ENCODE measurements at regions of chr14 and their contacts with region 1.

Region 1: GRCh38 chr14:93206793-93207467 is at the starts of genes GON7 and UBR7:
- DNase-seq: peak; percentile 96 to 97
- ATAC-seq: peak; percentile 98
- H3K4me3 ChIP-seq: peak within 1 kb of the TSS; percentile 75 to 89
- H3K27ac ChIP-seq: peak within 1 kb of the TSS in 1 of 2 donors; percentile 37
- H3K4me1 ChIP-seq: no peaks in the 10 kb centered on the region
- H3K27me3 ChIP-seq: no peaks in the 10 kb centered on the region
- total RNA-seq, gene GON7: 4.9 to 7.4 TPM
- total RNA-seq, gene UBR7: 15.7 to 18.0 TPM

Region 2: DNA sequence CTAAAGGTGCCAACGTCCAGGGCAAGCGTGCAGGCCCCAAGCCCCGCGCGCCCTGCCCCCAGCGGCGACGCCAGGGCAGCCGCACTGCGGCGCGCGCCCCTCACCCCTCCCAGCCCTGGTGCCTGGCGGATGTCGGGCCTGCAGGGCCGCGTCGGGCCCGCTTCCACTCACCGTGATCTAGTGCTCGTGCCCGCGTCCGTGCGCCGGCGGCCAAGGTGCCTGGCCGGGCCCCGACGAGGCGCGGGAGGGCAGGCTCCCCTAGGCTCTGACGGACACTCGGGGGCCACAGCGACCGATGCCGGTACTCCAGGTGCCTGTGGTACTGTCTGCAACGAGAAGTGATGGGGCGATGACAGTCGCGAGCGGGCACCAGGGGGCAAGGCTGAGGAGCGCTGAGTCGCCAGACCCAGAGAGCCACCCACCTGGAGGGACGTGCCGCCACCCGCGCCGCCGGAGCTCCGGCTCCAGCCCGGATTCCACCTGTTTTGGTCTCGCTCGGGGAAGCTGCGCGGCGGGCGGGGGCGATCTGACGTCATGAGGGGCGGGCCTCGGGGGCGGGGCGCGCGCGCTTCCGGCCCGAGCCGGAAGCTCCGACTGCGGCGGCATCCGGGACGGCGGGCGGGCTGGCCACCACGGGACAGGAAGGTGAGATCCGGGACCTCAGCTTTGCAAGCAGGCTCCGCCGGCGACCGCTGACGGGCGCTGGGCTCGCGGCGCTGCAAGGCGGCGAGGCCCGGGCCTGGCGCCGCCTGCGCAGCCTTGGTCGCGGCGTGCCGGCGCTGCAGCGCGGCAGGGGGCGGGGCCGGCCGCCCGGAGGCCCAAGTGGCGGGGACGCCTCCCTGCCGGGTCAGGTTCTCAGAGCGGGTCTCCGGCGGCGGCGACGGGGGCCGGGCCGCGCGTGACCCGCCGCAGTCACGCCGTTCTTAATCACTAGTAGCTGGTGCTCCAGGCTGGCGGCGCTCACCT is 22.3 kb before region 1 on chr14 and contains the starts of genes LYSET and MOAP1:
- intact Hi-C with region 1: loop called in 1 of 2 experiments (anchors 2 kb)
- DNase-seq: peak; percentile 94 to 97
- ATAC-seq: peak; percentile 96
- H3K4me3 ChIP-seq: peak within 1 kb of the TSS; percentile 47 to 80
- H3K27ac ChIP-seq: peak within 1 kb of the TSS; percentile 74 to 92
- H3K4me1 ChIP-seq: peaks cover 0 to 2% of the 10 kb centered on the region in 2 donors
- H3K27me3 ChIP-seq: no peaks in the 10 kb centered on the region
- total RNA-seq, gene LYSET: 12.7 to 13.7 TPM
- total RNA-seq, gene MOAP1: 22.0 to 22.8 TPM

Region 3: GRCh38 chr14:93332853-93333630 is 126.1 kb after region 1 on chr14 and contains the start of gene BTBD7:
- intact Hi-C with region 1: loop called in 1 of 2 experiments (anchors 2 kb)
- DNase-seq: peak; percentile 97 to 99
- ATAC-seq: peak; percentile 99
- H3K4me3 ChIP-seq: peak within 1 kb of the TSS; percentile 87 to 91
- H3K27ac ChIP-seq: peak within 1 kb of the TSS; percentile 84 to 93
- H3K4me1 ChIP-seq: peaks cover 0 to 11% of the 10 kb centered on the region in 2 donors
- H3K27me3 ChIP-seq: no peaks in the 10 kb centered on the region
- total RNA-seq, gene BTBD7: 39.6 to 51.2 TPM

Region 4: GRCh38 chr14:93619176-93619793 is 412.4 kb after region 1 on chr14:
- intact Hi-C with region 1: loop called in 1 of 2 experiments (anchors 5 kb)
- DNase-seq: no peak
- ATAC-seq: no peak
- H3K4me3 ChIP-seq: no peak overlapping the region
- H3K27ac ChIP-seq: no peak overlapping the region
- H3K4me1 ChIP-seq: no peaks in the 10 kb centered on the region
- H3K27me3 ChIP-seq: no peaks in the 10 kb centered on the region